Activated naive CD4-positive, alpha-beta T cell treated with anti-CD3 and anti-CD28 coated beads for 36 hours (primary cell): ENCODE measurements at regions of chr19 and their contacts with region 1.

Region 1: GRCh38 chr19:15532779-15533521 is 24.6 kb downstream of the CYP4F22 start:
- DNase-seq: peak; percentile 61
- H3K4me3 Mint-ChIP-seq: no peak overlapping the region
- H3K27ac Mint-ChIP-seq: peak overlapping the region; percentile 54
- H3K4me1 Mint-ChIP-seq: peaks cover 34% of the 10 kb centered on the region
- H3K27me3 Mint-ChIP-seq: no peaks in the 10 kb centered on the region

Region 2: GRCh38 chr19:15511671-15512424 is 21.1 kb before region 1 on chr19:
- CTCF ChIA-PET with region 1: no interaction called
- intact Hi-C with region 1: loop called (anchors 2 kb)
- DNase-seq: no peak
- H3K4me3 Mint-ChIP-seq: no peak overlapping the region
- H3K27ac Mint-ChIP-seq: no peak overlapping the region
- H3K4me1 Mint-ChIP-seq: peaks cover 29% of the 10 kb centered on the region
- H3K27me3 Mint-ChIP-seq: peaks cover 17% of the 10 kb centered on the region